A549 (cell line): ENCODE measurements at regions of chr6 and their contacts with region 1.

Region 1: DNA sequence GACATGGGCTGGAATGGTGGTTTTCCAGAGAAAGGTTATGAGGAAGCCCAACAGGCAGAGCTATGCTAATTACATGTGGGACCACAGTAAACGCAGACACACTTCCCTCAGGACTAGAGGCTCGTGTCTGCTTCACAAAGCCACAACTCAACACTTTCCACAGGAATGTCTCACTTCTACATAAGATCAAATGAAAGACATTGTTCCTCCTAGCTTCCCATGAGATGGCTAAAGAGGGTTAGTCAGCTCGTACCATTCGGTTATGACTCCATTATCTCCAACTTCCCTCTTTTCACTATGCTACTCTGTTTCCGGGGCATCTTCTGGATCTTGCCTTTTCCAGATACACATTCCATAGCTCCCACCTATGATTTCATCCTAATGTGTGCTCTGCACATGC is 29.1 kb upstream of the ZC3H12D start:
- DNase-seq: no peak
- ATAC-seq: no peak
- H3K4me3 ChIP-seq: no peak overlapping the region
- H3K27ac ChIP-seq: no peak overlapping the region
- H3K4me1 ChIP-seq: no peaks in the 10 kb centered on the region
- CTCF ChIP-seq: no peak
- EP300 ChIP-seq: no peak
- POLR2A ChIP-seq: no peak
- RAD21 ChIP-seq: no peak

Region 2: DNA sequence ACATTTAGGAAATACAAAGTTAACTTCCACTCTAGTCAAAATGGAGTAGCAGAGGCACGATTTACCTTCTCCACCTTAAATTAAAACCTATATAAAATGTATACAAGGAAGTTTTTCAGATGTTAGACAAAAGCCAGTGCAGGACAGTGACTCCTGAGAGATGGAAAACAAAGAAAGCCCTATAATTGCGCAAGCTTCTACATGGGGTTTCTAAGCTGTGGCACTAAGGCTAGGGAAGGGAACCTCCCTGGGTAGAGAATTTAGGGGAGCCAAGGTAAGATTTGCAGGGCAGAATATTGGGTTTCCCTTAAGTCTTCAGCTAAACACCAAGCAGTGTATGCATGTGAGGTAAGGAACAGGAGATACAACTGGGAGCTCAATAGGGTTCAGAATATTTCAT is 10.6 kb before region 1 on chr6:
- CTCF ChIA-PET with region 1: interaction called, 10 read pairs
- POLR2A ChIA-PET with region 1: no interaction called
- DNase-seq: no peak
- ATAC-seq: no peak
- H3K4me3 ChIP-seq: no peak overlapping the region
- H3K27ac ChIP-seq: no peak overlapping the region
- H3K4me1 ChIP-seq: no peaks in the 10 kb centered on the region
- CTCF ChIP-seq: no peak
- EP300 ChIP-seq: no peak
- POLR2A ChIP-seq: no peak
- RAD21 ChIP-seq: no peak

Region 3: DNA sequence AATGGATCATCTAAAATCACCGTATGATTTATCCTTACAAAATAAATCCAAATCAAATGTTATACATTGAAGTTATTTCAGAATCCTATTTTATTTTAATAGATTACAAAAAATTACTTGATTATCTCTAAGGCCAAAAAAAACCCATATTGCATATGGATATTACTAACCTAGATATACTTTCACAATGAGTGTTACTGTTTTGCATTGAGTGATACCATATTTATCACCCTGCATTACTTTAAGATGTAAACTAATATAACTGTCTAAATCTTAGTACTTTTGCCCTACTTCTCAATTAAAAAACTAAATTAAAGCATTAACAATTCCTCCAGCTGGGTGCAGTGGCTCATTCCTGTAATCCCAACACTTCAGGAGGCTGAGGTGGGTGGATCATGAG is 20.8 kb after region 1 on chr6:
- CTCF ChIA-PET with region 1: no interaction called
- POLR2A ChIA-PET with region 1: no interaction called
- DNase-seq: no peak
- ATAC-seq: no peak
- H3K4me3 ChIP-seq: no peak overlapping the region
- H3K27ac ChIP-seq: no peak overlapping the region
- H3K4me1 ChIP-seq: no peaks in the 10 kb centered on the region
- CTCF ChIP-seq: no peak
- EP300 ChIP-seq: no peak
- POLR2A ChIP-seq: no peak
- RAD21 ChIP-seq: no peak

Region 4: DNA sequence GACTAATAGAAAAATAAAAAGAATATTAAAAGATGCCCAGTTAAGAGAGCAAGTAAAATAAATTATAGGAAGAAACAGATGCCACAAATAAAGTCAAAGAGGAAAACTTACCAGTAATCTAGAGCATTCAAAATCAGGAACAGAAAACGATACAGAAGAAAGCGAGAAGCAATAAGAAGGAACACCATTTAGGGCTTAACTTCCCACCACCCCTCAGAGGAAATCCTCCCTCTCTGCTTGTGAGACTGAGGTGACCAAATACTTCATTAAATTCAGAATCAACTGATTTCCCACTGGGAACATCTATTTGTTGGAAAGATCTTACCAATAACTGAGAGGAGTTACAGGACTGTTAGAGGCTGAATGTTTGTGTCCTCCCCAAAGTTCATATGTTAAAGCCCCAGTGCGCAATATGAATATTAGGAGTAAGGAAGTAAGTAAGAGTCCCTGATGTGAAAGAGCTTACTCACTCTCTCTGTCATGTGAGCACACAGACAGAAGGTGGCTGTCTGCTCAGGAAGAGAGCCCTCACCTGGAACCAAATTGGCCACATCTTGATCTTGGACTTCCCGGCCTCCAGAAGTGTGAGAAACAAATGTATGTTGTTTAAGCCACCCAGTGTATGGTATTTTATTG is 115.1 kb after region 1 on chr6:
- CTCF ChIA-PET with region 1: no interaction called
- POLR2A ChIA-PET with region 1: no interaction called
- DNase-seq: no peak
- ATAC-seq: peak in 1 of 2 experiments; percentile 62; a peak in 1 of 6 replicates
- H3K4me3 ChIP-seq: no peak overlapping the region
- H3K27ac ChIP-seq: no peak overlapping the region
- H3K4me1 ChIP-seq: 0 out of 3 replicates have a peak, but pooled peaks cover 3% of the 10 kb centered on the region
- CTCF ChIP-seq: no peak
- EP300 ChIP-seq: no peak
- POLR2A ChIP-seq: no peak
- RAD21 ChIP-seq: no peak